PC-9 (cell line): ENCODE measurements at regions of chr3 and their contacts with region 1.

Region 1: DNA sequence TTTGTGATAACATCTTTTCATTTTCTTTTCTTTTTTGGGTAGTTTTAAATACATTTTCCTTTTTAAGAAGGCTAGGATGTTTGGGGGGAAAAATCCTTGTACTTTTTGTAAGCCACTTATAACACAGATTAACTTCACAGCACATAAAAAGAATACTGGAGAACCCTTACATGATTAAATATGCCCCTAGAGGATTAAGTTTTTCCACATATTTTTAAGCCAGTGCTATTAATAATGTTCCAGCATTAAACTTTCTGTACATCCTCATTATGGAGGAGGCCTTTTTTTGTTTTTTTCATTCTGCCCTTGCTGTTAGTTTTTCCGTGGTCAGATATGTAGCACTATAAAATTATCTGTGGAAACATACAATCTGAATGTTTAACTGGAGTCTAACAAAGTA is 147.9 kb downstream of the ATG7 start:
- DNase-seq: no peak
- H3K4me3 ChIP-seq: no peak overlapping the region
- H3K27ac ChIP-seq: no peak overlapping the region
- H3K4me1 ChIP-seq: no peaks in the 10 kb centered on the region
- H3K27me3 ChIP-seq: no peaks in the 10 kb centered on the region
- CTCF ChIP-seq: no peak

Region 2: DNA sequence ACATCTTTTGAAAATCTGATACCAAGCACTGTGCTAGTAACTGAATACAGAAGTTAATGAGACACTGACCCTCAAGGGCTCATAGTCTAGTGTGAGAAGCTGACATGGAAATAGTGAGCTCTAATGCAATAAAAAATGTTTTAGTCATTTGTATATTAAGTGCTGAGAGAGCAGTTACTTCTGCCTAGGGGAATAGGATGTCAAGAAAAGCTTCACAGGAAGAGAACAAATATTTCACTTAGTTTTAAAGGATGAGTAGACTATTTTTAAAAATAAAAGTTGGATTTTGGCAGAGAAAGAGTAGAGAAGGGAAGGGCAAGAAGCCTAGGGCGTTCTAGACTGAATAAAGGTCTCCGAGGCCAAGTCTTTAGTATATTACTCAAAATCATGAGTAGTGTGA is 10.6 kb after region 1 on chr3:
- CTCF ChIA-PET with region 1: no interaction called
- POLR2A ChIA-PET with region 1: interaction called, 10 read pairs
- intact Hi-C with region 1: no loop called
- DNase-seq: no peak
- H3K4me3 ChIP-seq: no peak overlapping the region
- H3K27ac ChIP-seq: no peak overlapping the region
- H3K4me1 ChIP-seq: no peaks in the 10 kb centered on the region
- H3K27me3 ChIP-seq: no peaks in the 10 kb centered on the region
- CTCF ChIP-seq: no peak

Region 3: GRCh38 chr3:11455956-11456355 is 35.9 kb after region 1 on chr3:
- CTCF ChIA-PET with region 1: no interaction called
- POLR2A ChIA-PET with region 1: no interaction called
- intact Hi-C with region 1: no loop called
- DNase-seq: no peak
- H3K4me3 ChIP-seq: no peak overlapping the region
- H3K27ac ChIP-seq: no peak overlapping the region
- H3K4me1 ChIP-seq: no peaks in the 10 kb centered on the region
- H3K27me3 ChIP-seq: no peaks in the 10 kb centered on the region
- CTCF ChIP-seq: no peak

Region 4: GRCh38 chr3:11671648-11672100 is 251.6 kb after region 1 on chr3:
- CTCF ChIA-PET with region 1: no interaction called
- POLR2A ChIA-PET with region 1: no interaction called
- intact Hi-C with region 1: no loop called
- DNase-seq: peak; percentile 34 to 78
- H3K4me3 ChIP-seq: no peak overlapping the region
- H3K27ac ChIP-seq: peak overlapping the region; percentile 63
- H3K4me1 ChIP-seq: peaks cover 16% of the 10 kb centered on the region
- H3K27me3 ChIP-seq: no peaks in the 10 kb centered on the region
- CTCF ChIP-seq: no peak